Naive thymus-derived CD4-positive, alpha-beta T cell (primary cell): ENCODE measurements at regions of chr20 and their contacts with region 1.

Region 1: GRCh38 chr20:9616833-9617489 is 102.6 kb downstream of the LAMP5 start:
- DNase-seq: peak in 7 of 9 donors; percentile 12 to 37 (median 21)
- ATAC-seq: peak; percentile 57
- H3K4me3 ChIP-seq: no peak overlapping the region
- H3K4me3 Mint-ChIP-seq: no peak overlapping the region
- H3K27ac ChIP-seq: no peak overlapping the region
- H3K27ac Mint-ChIP-seq: no peak overlapping the region
- H3K4me1 ChIP-seq: no peaks in the 10 kb centered on the region
- H3K4me1 Mint-ChIP-seq: no peaks in the 10 kb centered on the region
- H3K27me3 ChIP-seq: no peaks in the 10 kb centered on the region
- H3K27me3 Mint-ChIP-seq: peaks cover 0 to 18% (median 14%) of the 10 kb centered on the region in 5 donors

Region 2: GRCh38 chr20:9160757-9161156 is 456.2 kb before region 1 on chr20:
- CTCF ChIA-PET with region 1: no interaction called
- POLR2A ChIA-PET with region 1: no interaction called
- intact Hi-C with region 1: no loop called
- DNase-seq: no peak
- ATAC-seq: no peak
- H3K4me3 ChIP-seq: no peak overlapping the region
- H3K4me3 Mint-ChIP-seq: peak overlapping the region in 5 of 10 donors; percentile 13 to 53 (median 33)
- H3K27ac ChIP-seq: no peak overlapping the region
- H3K27ac Mint-ChIP-seq: peak overlapping the region in 2 of 9 donors; percentile 11 to 53
- H3K4me1 ChIP-seq: no peaks in the 10 kb centered on the region
- H3K4me1 Mint-ChIP-seq: no peaks in the 10 kb centered on the region
- H3K27me3 ChIP-seq: no peaks in the 10 kb centered on the region
- H3K27me3 Mint-ChIP-seq: no peaks in the 10 kb centered on the region

Region 3: GRCh38 chr20:9241232-9241692 is 375.7 kb before region 1 on chr20:
- CTCF ChIA-PET with region 1: no interaction called
- POLR2A ChIA-PET with region 1: no interaction called
- intact Hi-C with region 1: no loop called
- DNase-seq: no peak
- ATAC-seq: no peak
- H3K4me3 ChIP-seq: no peak overlapping the region
- H3K4me3 Mint-ChIP-seq: no peak overlapping the region
- H3K27ac ChIP-seq: no peak overlapping the region
- H3K27ac Mint-ChIP-seq: no peak overlapping the region
- H3K4me1 ChIP-seq: no peaks in the 10 kb centered on the region
- H3K4me1 Mint-ChIP-seq: no peaks in the 10 kb centered on the region
- H3K27me3 ChIP-seq: no peaks in the 10 kb centered on the region
- H3K27me3 Mint-ChIP-seq: no peaks in the 10 kb centered on the region

Region 4: GRCh38 chr20:9600562-9600961 is 16.4 kb before region 1 on chr20:
- CTCF ChIA-PET with region 1: no interaction called
- POLR2A ChIA-PET with region 1: no interaction called
- intact Hi-C with region 1: no loop called
- DNase-seq: no peak
- ATAC-seq: no peak
- H3K4me3 ChIP-seq: no peak overlapping the region
- H3K4me3 Mint-ChIP-seq: no peak overlapping the region
- H3K27ac ChIP-seq: no peak overlapping the region
- H3K27ac Mint-ChIP-seq: no peak overlapping the region
- H3K4me1 ChIP-seq: no peaks in the 10 kb centered on the region
- H3K4me1 Mint-ChIP-seq: no peaks in the 10 kb centered on the region
- H3K27me3 ChIP-seq: no peaks in the 10 kb centered on the region
- H3K27me3 Mint-ChIP-seq: peaks cover 0 to 13% (median 5%) of the 10 kb centered on the region in 5 donors

Region 5: GRCh38 chr20:9912858-9913434 is 296.0 kb after region 1 on chr20:
- CTCF ChIA-PET with region 1: no interaction called
- POLR2A ChIA-PET with region 1: no interaction called
- intact Hi-C with region 1: loop called (anchors 1 to 5 kb)
- DNase-seq: peak in 4 of 9 donors; percentile 1 to 23 (median 11)
- ATAC-seq: no peak
- H3K4me3 ChIP-seq: no peak overlapping the region
- H3K4me3 Mint-ChIP-seq: no peak overlapping the region
- H3K27ac ChIP-seq: no peak overlapping the region
- H3K27ac Mint-ChIP-seq: no peak overlapping the region
- H3K4me1 ChIP-seq: no peaks in the 10 kb centered on the region
- H3K4me1 Mint-ChIP-seq: peaks cover 0 to 2% (median 0%) of the 10 kb centered on the region in 7 donors
- H3K27me3 ChIP-seq: no peaks in the 10 kb centered on the region
- H3K27me3 Mint-ChIP-seq: peaks cover 11 to 16% (median 14%) of the 10 kb centered on the region in 5 donors

Region 6: GRCh38 chr20:10090588-10091166 is 473.7 kb after region 1 on chr20:
- CTCF ChIA-PET with region 1: interaction called, 12 read pairs
- POLR2A ChIA-PET with region 1: no interaction called
- intact Hi-C with region 1: no loop called
- DNase-seq: peak in 6 of 9 donors; percentile 7 to 51 (median 30)
- ATAC-seq: peak; percentile 67
- H3K4me3 ChIP-seq: no peak overlapping the region
- H3K4me3 Mint-ChIP-seq: no peak overlapping the region
- H3K27ac ChIP-seq: no peak overlapping the region
- H3K27ac Mint-ChIP-seq: peak overlapping the region in 1 of 9 donors; percentile 24
- H3K4me1 ChIP-seq: no peaks in the 10 kb centered on the region
- H3K4me1 Mint-ChIP-seq: no peaks in the 10 kb centered on the region
- H3K27me3 ChIP-seq: no peaks in the 10 kb centered on the region
- H3K27me3 Mint-ChIP-seq: peaks cover 0 to 16% (median 0%) of the 10 kb centered on the region in 5 donors

Region 7: DNA sequence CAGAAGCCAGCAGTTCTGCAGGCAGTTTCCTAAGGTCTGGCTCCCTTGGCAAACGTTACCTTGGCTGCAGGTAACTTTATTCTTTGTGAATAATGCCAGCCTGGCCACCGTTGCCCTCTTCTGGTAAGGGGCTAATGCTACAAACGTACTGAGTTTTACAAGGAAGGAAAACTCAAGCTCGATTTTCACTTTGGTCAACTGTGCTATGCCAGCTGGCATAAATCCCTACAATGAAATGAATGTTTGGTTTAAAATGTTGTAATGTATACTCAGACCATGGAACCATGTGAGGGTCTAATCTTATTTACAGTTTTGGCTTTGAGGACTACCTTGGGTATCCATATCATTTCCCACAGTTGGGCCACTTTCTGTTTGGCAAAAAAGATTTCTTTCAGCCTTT is 919.6 kb after region 1 on chr20:
- CTCF ChIA-PET with region 1: no interaction called
- POLR2A ChIA-PET with region 1: no interaction called
- intact Hi-C with region 1: loop called in 1 of 2 experiments (anchors 5 kb)
- DNase-seq: peak in 1 of 9 donors; percentile 9
- ATAC-seq: no peak
- H3K4me3 ChIP-seq: no peak overlapping the region
- H3K4me3 Mint-ChIP-seq: no peak overlapping the region
- H3K27ac ChIP-seq: no peak overlapping the region
- H3K27ac Mint-ChIP-seq: no peak overlapping the region
- H3K4me1 ChIP-seq: peaks cover 0 to 13% of the 10 kb centered on the region in 2 donors
- H3K4me1 Mint-ChIP-seq: peaks cover 10 to 34% (median 25%) of the 10 kb centered on the region in 7 donors
- H3K27me3 ChIP-seq: no peaks in the 10 kb centered on the region
- H3K27me3 Mint-ChIP-seq: no peaks in the 10 kb centered on the region